ENCODE measurements at regions of chr11 and their contacts with region 1.

Region 1: GRCh38 chr11:33065445-33066178 is 26.2 kb downstream of the TCP11L1 start:
- DNase-seq: peak; percentile 86
- H3K4me3 Mint-ChIP-seq: no peak overlapping the region
- H3K27ac Mint-ChIP-seq: no peak overlapping the region
- H3K4me1 Mint-ChIP-seq: peaks cover 41% of the 10 kb centered on the region
- H3K27me3 Mint-ChIP-seq: peaks cover 1% of the 10 kb centered on the region

Region 2: GRCh38 chr11:32326522-32326921 is 739.1 kb before region 1 on chr11:
- CTCF ChIA-PET with region 1: no interaction called
- intact Hi-C with region 1: loop called (anchors 10 kb)
- DNase-seq: no peak
- H3K4me3 Mint-ChIP-seq: no peak overlapping the region
- H3K27ac Mint-ChIP-seq: no peak overlapping the region
- H3K4me1 Mint-ChIP-seq: no peaks in the 10 kb centered on the region
- H3K27me3 Mint-ChIP-seq: peaks cover 17% of the 10 kb centered on the region

Region 3: GRCh38 chr11:32809313-32809712 is 256.3 kb before region 1 on chr11:
- CTCF ChIA-PET with region 1: interaction called, 18 read pairs
- intact Hi-C with region 1: loop called (anchors 1 kb)
- DNase-seq: peak; percentile 87
- H3K4me3 Mint-ChIP-seq: no peak overlapping the region
- H3K27ac Mint-ChIP-seq: no peak overlapping the region
- H3K4me1 Mint-ChIP-seq: no peaks in the 10 kb centered on the region
- H3K27me3 Mint-ChIP-seq: no peaks in the 10 kb centered on the region

Region 4: DNA sequence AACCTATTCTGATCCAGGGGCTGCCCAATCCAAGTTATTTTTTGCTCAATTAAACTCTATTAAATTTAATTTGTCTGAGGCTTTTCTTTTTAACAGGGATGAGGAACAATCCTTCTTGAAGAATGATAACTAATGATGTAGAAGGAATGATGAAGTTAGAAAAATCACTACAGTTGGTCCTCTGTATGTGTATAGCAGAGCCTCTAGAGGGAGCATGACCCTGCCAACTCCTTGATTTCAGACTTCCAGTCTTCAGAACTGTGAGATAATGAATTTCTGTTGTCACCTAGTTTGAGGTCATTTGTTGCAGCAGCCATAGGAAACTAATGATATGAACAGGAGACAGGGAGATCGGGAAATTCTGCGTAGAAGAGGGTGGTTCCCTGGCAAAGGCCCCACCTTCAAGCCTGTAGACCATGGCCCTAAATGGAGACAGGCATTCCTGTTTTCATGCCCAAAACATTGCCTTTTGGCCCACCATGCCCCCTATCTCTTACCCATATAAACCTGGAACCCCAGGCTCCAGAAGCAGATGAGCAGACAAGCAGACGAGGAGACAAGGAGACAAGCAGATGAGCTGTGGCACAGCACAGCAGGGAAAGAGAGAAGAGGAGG is 180.7 kb before region 1 on chr11:
- CTCF ChIA-PET with region 1: interaction called, 8 read pairs
- intact Hi-C with region 1: loop called (anchors 1 kb)
- DNase-seq: no peak
- H3K4me3 Mint-ChIP-seq: no peak overlapping the region
- H3K27ac Mint-ChIP-seq: no peak overlapping the region
- H3K4me1 Mint-ChIP-seq: no peaks in the 10 kb centered on the region
- H3K27me3 Mint-ChIP-seq: peaks cover 2% of the 10 kb centered on the region

Region 5: DNA sequence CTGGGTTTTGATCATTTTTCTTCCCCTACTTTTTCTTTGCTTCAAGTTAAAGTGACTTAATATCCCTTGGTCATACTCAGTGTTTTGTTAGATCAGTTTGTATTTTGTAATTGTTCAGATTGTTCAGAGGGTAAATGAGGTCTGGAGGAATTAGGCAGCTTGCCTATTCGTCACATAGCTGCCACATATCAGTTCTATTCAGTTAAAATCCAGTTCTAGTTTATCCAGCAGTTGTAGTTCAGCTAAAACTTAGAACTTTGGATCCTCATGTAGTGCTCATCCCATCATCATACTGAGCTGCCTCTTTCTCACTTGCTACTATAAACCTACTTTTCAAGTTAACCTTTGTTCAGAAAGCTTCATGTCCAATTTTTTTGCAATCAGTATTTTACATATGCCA is 97.1 kb before region 1 on chr11:
- CTCF ChIA-PET with region 1: interaction called, 39 read pairs
- intact Hi-C with region 1: no loop called
- DNase-seq: no peak
- H3K4me3 Mint-ChIP-seq: no peak overlapping the region
- H3K27ac Mint-ChIP-seq: no peak overlapping the region
- H3K4me1 Mint-ChIP-seq: no peaks in the 10 kb centered on the region
- H3K27me3 Mint-ChIP-seq: no peaks in the 10 kb centered on the region

Region 6: DNA sequence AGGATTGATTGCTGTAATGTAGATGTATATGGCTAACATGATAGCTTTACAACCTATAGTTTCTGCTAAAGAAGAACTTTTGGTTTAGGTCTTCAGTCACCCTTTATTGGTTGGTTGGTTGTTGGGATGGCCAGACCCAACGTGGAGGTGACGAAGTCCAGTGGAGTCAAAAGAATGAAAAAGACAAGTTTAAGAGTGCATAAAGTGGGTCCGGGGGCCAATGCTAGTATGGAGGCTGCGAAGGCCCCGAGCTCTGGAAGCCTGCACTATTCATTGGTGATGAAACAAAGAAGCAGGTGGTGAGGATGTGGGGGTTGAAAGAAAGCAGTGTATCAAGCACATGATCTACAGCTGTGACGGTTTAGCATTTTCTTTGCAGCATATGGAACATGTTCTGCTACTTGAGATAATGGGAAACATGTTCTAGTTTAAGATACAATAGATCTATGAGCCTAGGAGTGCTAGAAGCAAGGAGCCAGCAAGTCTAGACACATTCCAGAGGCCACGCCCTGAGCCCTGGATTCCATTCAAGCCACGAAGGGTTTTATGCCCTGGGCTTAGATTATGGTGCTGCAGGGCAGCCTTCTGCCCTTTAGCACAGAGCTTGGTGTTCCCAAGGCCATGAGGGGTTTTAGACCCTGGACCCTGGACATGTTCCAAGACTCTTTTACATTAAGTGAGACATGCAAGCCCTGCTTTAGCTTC is 19.9 kb before region 1 on chr11:
- CTCF ChIA-PET with region 1: interaction called, 12 read pairs
- intact Hi-C with region 1: loop called (anchors 1 kb)
- DNase-seq: no peak
- H3K4me3 Mint-ChIP-seq: no peak overlapping the region
- H3K27ac Mint-ChIP-seq: no peak overlapping the region
- H3K4me1 Mint-ChIP-seq: peaks cover 14% of the 10 kb centered on the region
- H3K27me3 Mint-ChIP-seq: no peaks in the 10 kb centered on the region

Region 7: GRCh38 chr11:33179348-33179803 is 113.8 kb after region 1 on chr11:
- CTCF ChIA-PET with region 1: no interaction called
- intact Hi-C with region 1: no loop called
- DNase-seq: no peak
- H3K4me3 Mint-ChIP-seq: no peak overlapping the region
- H3K27ac Mint-ChIP-seq: no peak overlapping the region
- H3K4me1 Mint-ChIP-seq: peaks cover 9% of the 10 kb centered on the region
- H3K27me3 Mint-ChIP-seq: no peaks in the 10 kb centered on the region